ENCODE measurements at regions of chr3 and their contacts with region 1.

Region 1: GRCh38 chr3:58237238-58237940 is at the start of gene ABHD6:
- DNase-seq: peak; percentile 73 to 92 (median 83)
- ATAC-seq: peak; percentile 84
- H3K4me3 ChIP-seq: peak within 1 kb of the TSS; percentile 57 to 79
- H3K4me3 Mint-ChIP-seq: peak within 1 kb of the TSS; percentile 92
- H3K27ac ChIP-seq: peak within 1 kb of the TSS; percentile 38 to 49
- H3K27ac Mint-ChIP-seq: peak within 1 kb of the TSS; percentile 87
- H3K4me1 ChIP-seq: peaks cover 7% of the 10 kb centered on the region
- H3K4me1 Mint-ChIP-seq: peaks cover 17% of the 10 kb centered on the region
- H3K27me3 ChIP-seq: no peaks in the 10 kb centered on the region
- H3K27me3 Mint-ChIP-seq: peaks cover 14% of the 10 kb centered on the region
- CTCF ChIP-seq: no peak
- total RNA-seq, gene ABHD6: 1.9 to 2.1 TPM

Region 2: DNA sequence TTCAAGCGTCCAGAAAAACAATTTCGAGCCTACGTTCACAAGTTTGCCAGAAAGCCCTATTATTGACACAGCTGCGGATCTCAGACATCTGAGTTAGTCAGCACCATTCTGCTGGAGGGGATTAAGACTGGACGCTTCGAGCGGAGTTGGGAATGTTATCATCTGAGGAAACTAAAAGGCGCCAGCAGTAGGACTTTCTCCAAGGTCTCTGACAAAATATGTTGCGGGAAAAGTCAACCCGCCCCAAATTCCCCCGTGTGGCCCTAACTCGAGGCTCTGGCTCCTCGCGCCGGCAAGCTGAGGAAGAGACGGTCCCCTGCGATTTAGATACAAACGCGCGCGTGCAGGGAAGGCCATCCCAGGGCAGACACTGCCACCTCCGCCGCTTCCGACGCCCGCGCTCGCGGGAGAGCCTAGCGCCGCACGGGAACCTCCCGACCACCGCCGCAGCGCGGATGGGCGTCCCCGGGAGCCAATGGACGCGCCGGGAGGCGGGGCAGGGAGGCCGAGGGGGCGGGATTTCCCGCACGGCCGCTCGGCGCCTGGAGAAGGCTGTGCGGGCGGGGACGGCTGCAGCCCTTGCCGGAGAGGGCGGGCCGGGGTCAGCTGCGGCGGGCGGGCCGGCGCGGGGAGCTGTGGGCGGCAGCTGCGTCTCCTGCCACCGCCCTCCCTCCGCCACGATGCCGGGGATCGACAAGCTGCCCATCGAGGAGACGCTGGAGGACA is 1010.0 kb before region 1 on chr3 and contains the start of gene APPL1:
- CTCF ChIA-PET with region 1: no interaction called
- POLR2A ChIA-PET with region 1: no interaction called
- intact Hi-C with region 1: loop called in 1 of 2 experiments (anchors 5 kb)
- DNase-seq: peak; percentile 68 to 93 (median 87)
- ATAC-seq: peak; percentile 89
- H3K4me3 ChIP-seq: peak within 1 kb of the TSS; percentile 82 to 91
- H3K4me3 Mint-ChIP-seq: peak within 1 kb of the TSS; percentile 93
- H3K27ac ChIP-seq: peak within 1 kb of the TSS; percentile 48 to 68
- H3K27ac Mint-ChIP-seq: peak within 1 kb of the TSS; percentile 89
- H3K4me1 ChIP-seq: peaks cover 11% of the 10 kb centered on the region
- H3K4me1 Mint-ChIP-seq: peaks cover 30% of the 10 kb centered on the region
- H3K27me3 ChIP-seq: no peaks in the 10 kb centered on the region
- H3K27me3 Mint-ChIP-seq: no peaks in the 10 kb centered on the region
- CTCF ChIP-seq: no peak
- total RNA-seq, gene APPL1: 19.3 to 23.4 TPM

Region 3: GRCh38 chr3:57755668-57756527 is 481.5 kb before region 1 on chr3 and contains the start of gene SLMAP:
- CTCF ChIA-PET with region 1: no interaction called
- POLR2A ChIA-PET with region 1: no interaction called
- intact Hi-C with region 1: loop called in 1 of 2 experiments (anchors 10 kb)
- DNase-seq: peak; percentile 93 to 98 (median 96)
- ATAC-seq: peak; percentile 92
- H3K4me3 ChIP-seq: peak within 1 kb of the TSS; percentile 69 to 80
- H3K4me3 Mint-ChIP-seq: peak within 1 kb of the TSS; percentile 97
- H3K27ac ChIP-seq: peak within 1 kb of the TSS; percentile 45 to 79
- H3K27ac Mint-ChIP-seq: peak within 1 kb of the TSS; percentile 95
- H3K4me1 ChIP-seq: peaks cover 34% of the 10 kb centered on the region
- H3K4me1 Mint-ChIP-seq: peaks cover 44% of the 10 kb centered on the region
- H3K27me3 ChIP-seq: no peaks in the 10 kb centered on the region
- H3K27me3 Mint-ChIP-seq: no peaks in the 10 kb centered on the region
- CTCF ChIP-seq: no peak
- total RNA-seq, gene SLMAP: 55.0 to 56.7 TPM

Region 4: GRCh38 chr3:58217209-58217811 is 20.1 kb before region 1 on chr3:
- CTCF ChIA-PET with region 1: interaction called, 14 read pairs
- POLR2A ChIA-PET with region 1: no interaction called
- intact Hi-C with region 1: no loop called
- DNase-seq: peak; percentile 16 to 80 (median 55)
- ATAC-seq: peak; percentile 90
- H3K4me3 ChIP-seq: no peak overlapping the region
- H3K4me3 Mint-ChIP-seq: peak overlapping the region; percentile 16
- H3K27ac ChIP-seq: no peak overlapping the region
- H3K27ac Mint-ChIP-seq: no peak overlapping the region
- H3K4me1 ChIP-seq: peaks cover 4% of the 10 kb centered on the region
- H3K4me1 Mint-ChIP-seq: peaks cover 7% of the 10 kb centered on the region
- H3K27me3 ChIP-seq: no peaks in the 10 kb centered on the region
- H3K27me3 Mint-ChIP-seq: no peaks in the 10 kb centered on the region
- CTCF ChIP-seq: peak; percentile 78

Region 5: GRCh38 chr3:58414538-58415197 is 177.3 kb after region 1 on chr3:
- CTCF ChIA-PET with region 1: no interaction called
- POLR2A ChIA-PET with region 1: no interaction called
- intact Hi-C with region 1: loop called (anchors 1 kb)
- DNase-seq: peak in 6 of 9 experiments; percentile 23 to 72 (median 42)
- ATAC-seq: peak; percentile 91
- H3K4me3 ChIP-seq: no peak overlapping the region
- H3K4me3 Mint-ChIP-seq: no peak overlapping the region
- H3K27ac ChIP-seq: no peak overlapping the region
- H3K27ac Mint-ChIP-seq: no peak overlapping the region
- H3K4me1 ChIP-seq: no peaks in the 10 kb centered on the region
- H3K4me1 Mint-ChIP-seq: no peaks in the 10 kb centered on the region
- H3K27me3 ChIP-seq: no peaks in the 10 kb centered on the region
- H3K27me3 Mint-ChIP-seq: no peaks in the 10 kb centered on the region
- CTCF ChIP-seq: peak; percentile 60

Region 6: GRCh38 chr3:58491506-58492402 is 254.4 kb after region 1 on chr3 and contains the start of gene KCTD6:
- CTCF ChIA-PET with region 1: no interaction called
- POLR2A ChIA-PET with region 1: no interaction called
- intact Hi-C with region 1: loop called (anchors 1 to 2 kb)
- DNase-seq: peak; percentile 74 to 93 (median 85)
- ATAC-seq: peak; percentile 81
- H3K4me3 ChIP-seq: peak within 1 kb of the TSS; percentile 72 to 88
- H3K4me3 Mint-ChIP-seq: peak within 1 kb of the TSS; percentile 93
- H3K27ac ChIP-seq: peak within 1 kb of the TSS; percentile 50 to 54
- H3K27ac Mint-ChIP-seq: peak within 1 kb of the TSS; percentile 91
- H3K4me1 ChIP-seq: peaks cover 45% of the 10 kb centered on the region
- H3K4me1 Mint-ChIP-seq: peaks cover 54% of the 10 kb centered on the region
- H3K27me3 ChIP-seq: no peaks in the 10 kb centered on the region
- H3K27me3 Mint-ChIP-seq: no peaks in the 10 kb centered on the region
- CTCF ChIP-seq: peak; percentile 33
- total RNA-seq, gene KCTD6: 4.2 to 4.5 TPM

Region 7: DNA sequence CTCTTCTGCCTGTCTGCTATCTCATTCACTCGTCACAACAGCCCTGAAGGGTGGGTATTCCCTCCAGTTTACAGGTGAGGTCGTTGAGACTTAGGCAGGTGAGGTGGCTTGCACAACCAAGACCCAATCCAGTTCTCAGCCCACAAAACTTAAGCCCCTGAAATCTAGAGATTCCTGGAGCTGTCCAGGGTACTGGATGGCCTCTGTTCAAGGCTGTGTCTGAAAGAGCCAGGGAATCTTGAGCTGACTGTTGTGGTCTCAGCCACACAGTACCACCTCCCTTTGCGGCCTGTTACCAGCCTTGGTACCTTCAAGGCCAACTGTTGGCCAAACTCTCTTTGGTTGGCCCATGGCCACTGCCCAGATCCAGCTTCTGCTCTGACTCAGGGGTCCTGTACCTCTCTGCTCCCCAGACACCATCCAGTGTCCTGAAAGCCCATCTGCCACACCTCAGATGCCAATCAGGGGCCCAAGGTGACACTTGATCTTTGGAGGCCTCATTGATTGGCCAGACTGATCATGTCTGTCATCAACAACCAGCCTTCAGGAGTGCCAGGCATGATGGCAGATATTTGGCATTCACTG is 350.7 kb after region 1 on chr3:
- CTCF ChIA-PET with region 1: no interaction called
- POLR2A ChIA-PET with region 1: no interaction called
- intact Hi-C with region 1: no loop called
- DNase-seq: no peak
- ATAC-seq: no peak
- H3K4me3 ChIP-seq: no peak overlapping the region
- H3K4me3 Mint-ChIP-seq: no peak overlapping the region
- H3K27ac ChIP-seq: no peak overlapping the region
- H3K27ac Mint-ChIP-seq: no peak overlapping the region
- H3K4me1 ChIP-seq: no peaks in the 10 kb centered on the region
- H3K4me1 Mint-ChIP-seq: peaks cover 15% of the 10 kb centered on the region
- H3K27me3 ChIP-seq: peaks cover 5 to 6% of the 10 kb centered on the region in 2 experiments
- H3K27me3 Mint-ChIP-seq: peaks cover 47% of the 10 kb centered on the region
- CTCF ChIP-seq: no peak